ENCODE measurements at regions of chr3 and their contacts with region 1.

Region 1: GRCh38 chr3:107927361-107928083 is 163.3 kb downstream of the CD47 start:
- DNase-seq: peak; percentile 91
- ATAC-seq: peak; percentile 96
- H3K4me3 ChIP-seq: peak overlapping the region; percentile 76
- H3K27ac ChIP-seq: peak overlapping the region; percentile 18
- H3K4me1 ChIP-seq: peaks cover 6% of the 10 kb centered on the region; the same call in 1 of the 2 replicates
- H3K27me3 ChIP-seq: no peaks in the 10 kb centered on the region
- CTCF ChIP-seq: peak; percentile 97

Region 2: GRCh38 chr3:107753480-107753879 is 174.0 kb before region 1 on chr3:
- CTCF ChIA-PET with region 1: interaction called, 5 read pairs
- POLR2A ChIA-PET with region 1: no interaction called
- intact Hi-C with region 1: loop called (anchors 1 kb)
- DNase-seq: peak; percentile 63
- ATAC-seq: peak; percentile 50
- H3K4me3 ChIP-seq: no peak overlapping the region
- H3K27ac ChIP-seq: no peak overlapping the region
- H3K4me1 ChIP-seq: peaks cover 13% of the 10 kb centered on the region
- H3K27me3 ChIP-seq: no peaks in the 10 kb centered on the region
- CTCF ChIP-seq: peak; percentile 82

Region 3: GRCh38 chr3:107846279-107846852 is 81.2 kb before region 1 on chr3:
- CTCF ChIA-PET with region 1: interaction called, 5 read pairs
- POLR2A ChIA-PET with region 1: no interaction called
- intact Hi-C with region 1: loop called (anchors 2 kb)
- DNase-seq: peak; percentile 80
- ATAC-seq: peak; percentile 94
- H3K4me3 ChIP-seq: peak overlapping the region; percentile 59
- H3K27ac ChIP-seq: no peak overlapping the region
- H3K4me1 ChIP-seq: peaks cover 14% of the 10 kb centered on the region
- H3K27me3 ChIP-seq: no peaks in the 10 kb centered on the region
- CTCF ChIP-seq: peak; percentile 90

Region 4: DNA sequence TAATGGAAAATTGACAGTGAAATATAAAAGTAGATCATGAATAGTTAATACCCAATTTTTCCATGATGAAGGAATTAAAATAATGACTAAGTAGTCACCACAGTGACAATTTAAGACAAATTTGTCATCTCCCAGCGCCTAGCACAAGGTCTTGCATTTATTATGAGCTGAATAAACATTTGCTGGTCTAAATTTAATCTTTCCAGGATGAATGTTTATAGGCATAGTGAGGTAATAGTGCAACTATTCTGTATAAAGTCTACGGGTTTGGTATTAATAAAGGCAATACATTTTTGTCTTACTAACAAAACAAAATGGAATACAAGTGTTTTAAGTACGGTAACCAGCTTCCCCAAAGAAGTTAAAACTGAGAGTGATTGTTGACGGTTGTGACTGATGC is 46.0 kb before region 1 on chr3:
- CTCF ChIA-PET with region 1: no interaction called
- POLR2A ChIA-PET with region 1: no interaction called
- intact Hi-C with region 1: loop called (anchors 2 kb)
- DNase-seq: no peak
- ATAC-seq: peak; percentile 70
- H3K4me3 ChIP-seq: no peak overlapping the region
- H3K27ac ChIP-seq: no peak overlapping the region
- H3K4me1 ChIP-seq: peaks cover 15% of the 10 kb centered on the region
- H3K27me3 ChIP-seq: no peaks in the 10 kb centered on the region
- CTCF ChIP-seq: no peak

Region 5: GRCh38 chr3:108090701-108091451 is 163.4 kb after region 1 on chr3 and contains the start of gene CD47:
- CTCF ChIA-PET with region 1: no interaction called
- POLR2A ChIA-PET with region 1: no interaction called
- intact Hi-C with region 1: loop called (anchors 5 kb)
- DNase-seq: peak; percentile 92
- ATAC-seq: peak; percentile 79
- H3K4me3 ChIP-seq: peak within 1 kb of the TSS; percentile 96
- H3K27ac ChIP-seq: peak within 1 kb of the TSS; percentile 17
- H3K4me1 ChIP-seq: peaks cover 15% of the 10 kb centered on the region; the same call in 1 of the 2 replicates
- H3K27me3 ChIP-seq: no peaks in the 10 kb centered on the region
- CTCF ChIP-seq: no peak
- total RNA-seq, gene CD47: 48.4 and 63.6 TPM in 2 replicates